ENCODE measurements at regions of chr11 and their contacts with region 1.

Region 1: DNA sequence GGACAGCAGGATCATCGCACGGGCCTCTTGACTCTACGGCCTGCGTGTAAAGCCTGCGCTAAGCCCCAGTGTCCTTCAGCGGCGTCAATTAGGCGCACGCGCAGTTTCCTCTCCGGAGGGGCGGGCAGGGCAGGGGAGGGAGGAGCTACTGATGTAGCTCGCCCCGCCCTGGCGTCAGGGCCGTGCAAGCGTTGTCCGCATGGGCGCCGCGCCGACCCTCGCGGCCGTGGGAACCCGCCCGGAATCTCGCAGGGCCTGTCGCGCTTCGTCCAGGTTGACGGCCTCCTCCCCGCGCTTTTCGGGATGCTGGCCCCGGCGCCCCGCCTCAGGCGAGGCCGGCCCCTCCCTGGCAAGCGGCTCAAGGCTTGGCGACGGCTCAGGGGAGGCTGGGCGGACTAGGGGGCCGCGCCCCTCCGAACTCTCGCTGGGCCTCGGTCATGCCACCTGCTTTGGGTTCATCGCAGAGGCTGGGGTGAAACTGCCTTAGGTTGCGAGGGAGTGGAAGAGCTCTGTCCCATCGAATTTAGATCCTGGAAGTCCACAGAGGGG is 61.1 kb downstream of the ST3GAL4 start:
- DNase-seq: peak; percentile 96
- ATAC-seq: peak; percentile 83

Region 2: GRCh38 chr11:126211235-126212088 is 205.2 kb before region 1 on chr11 and contains the starts of genes FAM118B and RPUSD4:
- intact Hi-C with region 1: loop called (anchors 5 kb)
- DNase-seq: peak; percentile 99
- ATAC-seq: peak; percentile 99
- total RNA-seq, gene FAM118B: 22.2 TPM
- total RNA-seq, gene RPUSD4: 40.7 TPM

Region 3: DNA sequence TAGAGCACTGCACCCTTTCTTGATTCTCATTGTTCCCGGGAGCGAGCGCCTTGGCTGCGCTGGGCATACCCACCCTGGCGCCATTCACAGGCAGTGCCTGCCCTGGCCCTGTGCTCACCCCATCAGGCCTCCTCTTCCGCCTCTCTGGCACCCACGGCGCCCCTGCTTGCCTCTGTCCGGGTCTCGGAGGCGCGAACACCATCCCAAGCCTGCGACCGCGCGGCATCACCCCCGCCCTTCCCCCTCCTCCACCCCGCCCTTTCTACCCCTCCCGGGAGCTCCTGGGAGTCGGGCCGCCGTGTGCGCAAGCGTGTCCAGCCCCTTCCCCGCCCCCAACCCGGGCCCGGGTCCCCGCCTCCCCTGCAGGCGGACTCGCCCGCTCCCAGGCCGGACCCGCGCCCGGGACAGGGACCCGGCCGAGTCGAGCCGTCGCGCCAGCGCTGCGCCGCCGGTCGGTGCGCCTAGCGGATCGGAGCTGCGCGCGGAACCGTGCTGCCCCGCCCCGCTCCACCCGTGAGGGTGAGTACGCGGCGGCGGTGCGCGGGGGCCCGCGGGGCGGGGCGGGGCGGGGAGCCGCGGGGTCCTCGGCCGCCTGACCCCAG is 61.2 kb before region 1 on chr11 and contains the start of gene ST3GAL4:
- intact Hi-C with region 1: loop called (anchors 5 kb)
- DNase-seq: peak; percentile 92
- ATAC-seq: peak; percentile 85
- total RNA-seq, gene ST3GAL4: 36.5 TPM

Region 4: GRCh38 chr11:126480410-126481302 is 64.0 kb after region 1 on chr11:
- intact Hi-C with region 1: loop called (anchors 10 kb)
- DNase-seq: peak; percentile 86
- ATAC-seq: peak; percentile 95